Dendritic cell treated with granulocyte-macrophage colony-stimulating factor and Interleukin-4, amounts not matched to agents 40 ng/mL and 50 ng/mL, for 4 days (primary cell): ENCODE measurements at regions of chr9 and their contacts with region 1.

Region 1: GRCh38 chr9:35646533-35647265 is 4.0 kb downstream of the SIT1 start:
- H3K4me3 Mint-ChIP-seq: peak overlapping the region; percentile 81
- H3K27ac Mint-ChIP-seq: peak overlapping the region; percentile 92
- H3K4me1 Mint-ChIP-seq: peaks cover 63% of the 10 kb centered on the region
- H3K27me3 Mint-ChIP-seq: no peaks in the 10 kb centered on the region

Region 2: DNA sequence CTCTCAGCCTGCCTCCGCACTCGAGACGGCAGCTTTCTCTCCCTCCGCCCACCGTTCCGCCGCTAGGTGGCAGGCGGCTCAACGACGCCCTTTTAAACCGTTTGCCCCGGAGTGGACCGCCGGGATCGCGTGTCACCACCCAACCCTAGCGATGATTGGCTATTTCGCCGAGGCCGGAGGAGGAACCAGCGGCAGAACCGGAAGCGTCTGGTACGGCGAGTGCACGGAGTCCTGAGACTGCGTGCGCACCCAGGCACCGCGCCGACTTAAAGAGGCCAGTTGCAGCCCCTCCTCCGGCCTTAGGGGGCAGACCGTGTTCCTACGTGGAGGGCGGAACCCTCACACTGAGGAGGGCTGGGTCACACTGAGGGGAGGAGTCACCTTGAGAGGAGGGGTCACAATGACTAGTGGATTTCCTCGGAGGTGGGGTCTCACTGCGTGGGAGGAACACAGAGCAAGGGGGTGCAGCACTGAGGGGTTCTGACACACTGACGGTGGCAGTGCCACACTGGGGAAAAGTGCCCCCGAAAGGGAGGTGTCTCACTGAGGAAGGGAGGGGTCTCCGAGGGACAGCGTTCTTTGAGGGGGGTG is 42.6 kb before region 1 on chr9:
- intact Hi-C with region 1: loop called (anchors 1 kb)
- H3K4me3 Mint-ChIP-seq: peak overlapping the region; percentile 96
- H3K27ac Mint-ChIP-seq: peak overlapping the region; percentile 94
- H3K4me1 Mint-ChIP-seq: peaks cover 56% of the 10 kb centered on the region
- H3K27me3 Mint-ChIP-seq: no peaks in the 10 kb centered on the region

Region 3: GRCh38 chr9:35657546-35658136 is 10.9 kb after region 1 on chr9 and contains the start of gene RMRP:
- intact Hi-C with region 1: loop called (anchors 1 kb)
- H3K4me3 Mint-ChIP-seq: peak within 1 kb of the TSS; percentile 90
- H3K27ac Mint-ChIP-seq: peak within 1 kb of the TSS; percentile 95
- H3K4me1 Mint-ChIP-seq: peaks cover 65% of the 10 kb centered on the region
- H3K27me3 Mint-ChIP-seq: peaks cover 2% of the 10 kb centered on the region

Region 4: DNA sequence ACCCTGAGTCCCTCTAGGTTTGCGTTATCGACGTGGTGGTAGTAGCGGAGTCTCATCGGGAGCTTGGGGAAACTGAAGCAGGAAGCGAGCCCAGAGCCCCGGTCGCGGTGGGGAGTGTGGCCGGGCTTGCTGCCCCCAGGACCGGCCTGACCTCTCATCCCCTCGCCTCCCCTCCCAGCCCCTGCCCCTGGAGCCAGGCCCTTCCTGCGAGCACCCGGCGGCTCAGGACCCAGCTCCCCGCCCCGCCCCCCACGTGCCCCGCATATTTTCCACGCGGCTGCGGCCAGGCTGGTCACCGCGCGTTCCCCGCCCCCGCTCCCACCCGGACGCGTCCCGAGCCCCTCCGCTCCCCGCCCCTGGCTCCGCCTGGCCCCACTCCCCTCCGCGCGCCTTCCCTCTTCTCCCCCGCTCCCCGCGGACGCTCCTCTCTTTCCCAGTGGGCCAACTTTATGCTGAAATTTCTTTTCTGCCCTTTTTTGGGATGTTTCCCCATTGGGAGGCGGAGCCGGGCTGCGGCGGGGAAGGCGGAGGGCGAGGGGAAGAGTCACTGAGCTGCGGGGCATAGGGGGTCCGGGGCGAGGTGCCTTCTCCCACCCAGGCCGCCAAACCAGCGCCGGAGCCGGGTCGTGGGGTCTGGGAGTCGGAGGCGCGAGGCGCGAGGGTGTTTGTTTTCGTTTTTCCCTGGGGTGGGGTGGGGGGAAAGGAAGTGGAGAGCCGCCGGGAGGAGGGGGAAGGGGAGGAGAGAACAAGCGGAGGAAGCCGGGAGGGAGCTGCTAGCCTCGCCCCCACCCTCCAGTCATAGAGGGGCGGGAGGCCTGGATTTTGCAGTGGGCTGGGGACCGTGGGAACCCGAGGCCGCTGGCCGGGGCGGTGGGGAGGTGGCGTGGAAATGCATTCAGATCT is 44.0 kb after region 1 on chr9:
- intact Hi-C with region 1: loop called (anchors 5 kb)
- H3K4me3 Mint-ChIP-seq: peak overlapping the region; percentile 86
- H3K27ac Mint-ChIP-seq: peak overlapping the region; percentile 83
- H3K4me1 Mint-ChIP-seq: peaks cover 37% of the 10 kb centered on the region
- H3K27me3 Mint-ChIP-seq: peaks cover 18% of the 10 kb centered on the region

Region 5: DNA sequence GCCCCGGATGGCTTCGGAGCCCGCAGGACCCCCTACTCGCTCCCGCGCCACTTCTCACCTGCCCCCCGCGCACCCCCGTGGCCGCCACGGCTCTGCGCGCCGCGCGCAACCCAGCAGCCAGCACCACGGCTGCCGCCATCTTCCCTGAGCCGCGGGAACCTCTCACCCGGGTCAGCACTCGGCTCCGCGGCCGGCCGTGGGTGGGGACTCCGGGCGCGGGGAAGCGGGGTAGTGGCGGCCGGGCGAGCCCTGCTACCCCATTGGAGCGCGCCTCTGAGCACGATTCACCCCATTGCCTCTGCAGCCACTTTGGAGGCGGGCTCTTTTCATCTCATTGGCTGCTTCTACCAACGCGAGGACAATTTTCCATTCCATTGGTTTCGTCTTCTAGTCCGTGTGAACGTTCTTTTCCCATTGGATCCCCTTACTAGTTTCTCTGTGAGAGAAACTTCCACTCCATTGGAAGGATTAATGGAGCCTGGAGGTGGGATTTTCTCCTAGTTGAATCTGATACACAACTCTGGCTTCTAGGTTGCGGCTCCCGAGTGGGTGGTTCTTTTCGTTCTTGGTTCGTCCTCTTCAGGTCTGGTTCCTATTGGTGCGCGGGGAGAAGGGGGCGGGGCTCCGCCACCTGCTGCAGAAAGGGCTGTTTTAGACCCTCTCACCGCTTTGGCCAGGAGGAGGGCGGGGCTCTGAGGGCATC is 168.3 kb after region 1 on chr9 and contains the start of gene HINT2:
- intact Hi-C with region 1: loop called (anchors 10 kb)
- H3K4me3 Mint-ChIP-seq: peak within 1 kb of the TSS; percentile 93
- H3K27ac Mint-ChIP-seq: peak within 1 kb of the TSS; percentile 86
- H3K4me1 Mint-ChIP-seq: peaks cover 56% of the 10 kb centered on the region
- H3K27me3 Mint-ChIP-seq: peaks cover 3% of the 10 kb centered on the region